K562 (cell line): ENCODE measurements at regions of chr5 and their contacts with region 1.

Region 1: DNA sequence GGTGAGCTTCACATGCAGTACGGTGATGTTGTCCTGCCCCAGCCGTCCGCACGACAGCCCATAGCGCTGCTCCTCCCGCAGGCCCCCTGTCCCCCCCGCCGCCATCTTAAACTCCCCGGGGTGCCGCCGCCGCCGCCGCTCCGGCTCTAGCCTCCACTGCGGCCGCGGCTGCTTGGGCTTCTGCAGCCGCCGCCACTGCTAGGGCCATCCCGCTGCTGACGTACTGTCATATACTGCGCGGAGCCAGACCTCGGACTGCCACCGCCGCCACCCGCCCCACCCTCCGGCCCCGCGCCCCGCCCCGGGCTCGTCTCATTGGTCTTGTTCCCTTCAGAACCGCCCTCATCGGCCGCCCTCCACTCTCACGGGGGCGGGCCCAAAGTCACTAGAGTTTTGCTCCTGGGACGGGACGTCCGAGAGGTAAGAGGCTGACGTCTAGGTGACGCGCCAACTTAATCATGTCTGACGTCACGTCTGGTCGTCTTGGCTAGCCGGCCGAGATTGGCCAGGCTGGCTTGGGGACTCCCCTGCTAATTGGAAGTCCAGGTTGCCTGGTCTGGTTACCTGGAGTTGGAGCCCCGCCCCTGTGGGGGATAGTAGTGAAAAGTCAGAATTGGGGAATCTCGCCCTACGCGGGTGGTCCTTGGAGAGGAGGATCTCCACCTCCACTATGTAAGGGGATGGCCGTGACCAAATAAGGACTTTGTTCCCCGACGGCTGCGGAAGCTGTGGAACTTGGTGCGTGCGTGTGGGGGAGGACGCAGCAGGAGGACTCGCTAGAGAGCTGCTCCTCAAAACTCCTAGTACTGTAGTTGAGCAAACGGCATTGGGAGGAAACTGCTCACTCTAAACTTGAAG is at the start of gene ELL2:
- DNase-seq: peak; percentile 93 to 100 (median 95)
- ATAC-seq: peak; percentile 87
- H3K4me3 ChIP-seq: peak within 1 kb of the TSS; percentile 81
- H3K27ac ChIP-seq: peak within 1 kb of the TSS; percentile 87
- H3K4me1 ChIP-seq: peaks cover 31 to 33% of the 10 kb centered on the region in 2 experiments; a peak in 4 of 5 replicates
- H3K27me3 ChIP-seq: no peaks in the 10 kb centered on the region
- CTCF ChIP-seq: no peak
- EP300 ChIP-seq: no peak
- POLR2A ChIP-seq: peak; percentile 66
- RAD21 ChIP-seq: no peak; a peak in 1 of 4 replicates
- polyA plus RNA-seq, gene ELL2: 4.3 to 6.8 TPM

Region 2: DNA sequence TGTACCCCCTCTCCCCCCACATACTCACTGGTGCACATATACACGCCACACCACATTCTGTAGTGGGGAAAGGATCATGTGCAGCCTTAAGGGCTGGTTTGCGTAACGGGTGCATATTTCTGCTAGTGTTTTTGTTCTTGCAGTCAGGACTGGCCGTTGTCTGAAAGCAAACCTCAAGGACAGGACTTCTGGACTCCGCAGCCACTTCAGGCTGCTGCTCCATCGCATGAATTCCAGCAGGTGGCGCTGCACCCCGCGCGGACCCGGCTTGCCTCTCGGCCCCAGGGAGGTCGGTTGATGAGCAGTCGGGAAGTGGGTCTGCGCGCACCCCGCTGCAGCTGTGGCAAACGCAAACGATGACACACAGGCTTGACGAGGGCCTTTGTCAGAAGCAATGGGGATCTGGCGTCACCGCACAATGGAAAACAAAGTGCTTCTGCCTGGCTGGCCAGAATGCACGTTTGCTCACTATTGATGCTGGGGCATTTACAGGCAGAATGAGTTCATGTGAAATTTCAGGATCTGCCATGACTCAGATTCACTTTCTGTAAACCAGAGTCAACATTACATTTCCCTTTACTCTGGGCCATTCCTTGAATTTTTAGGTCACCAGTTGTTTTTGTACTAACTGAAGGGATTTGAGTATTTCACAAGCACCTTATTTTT is 103.1 kb before region 1 on chr5:
- CTCF ChIA-PET with region 1: interaction called, 3 read pairs
- POLR2A ChIA-PET with region 1: interaction called, 3 read pairs
- in situ Hi-C with region 1: no loop called
- intact Hi-C with region 1: loop called (anchors 2 kb)
- DNase-seq: peak; percentile 88 to 90 (median 89)
- ATAC-seq: peak; percentile 97
- H3K4me3 ChIP-seq: no peak overlapping the region
- H3K27ac ChIP-seq: no peak overlapping the region
- H3K4me1 ChIP-seq: peaks cover 12 to 15% of the 10 kb centered on the region in 2 experiments; a peak in 4 of 5 replicates
- H3K27me3 ChIP-seq: 0 out of 5 replicates have a peak, but pooled peaks cover 0 to 4% of the 10 kb centered on the region in 2 experiments
- CTCF ChIP-seq: peak; percentile 90 to 97 (median 97)
- EP300 ChIP-seq: no peak
- POLR2A ChIP-seq: no peak
- RAD21 ChIP-seq: peak; percentile 97 to 99

Region 3: GRCh38 chr5:95928724-95929253 is 33.1 kb before region 1 on chr5:
- CTCF ChIA-PET with region 1: no interaction called
- POLR2A ChIA-PET with region 1: no interaction called
- in situ Hi-C with region 1: no loop called
- intact Hi-C with region 1: no loop called
- DNase-seq: no peak
- ATAC-seq: no peak; the same call in 2 of the 3 replicates
- H3K4me3 ChIP-seq: no peak overlapping the region
- H3K27ac ChIP-seq: peak overlapping the region; percentile 9; the same call in 1 of the 3 replicates
- H3K4me1 ChIP-seq: peaks cover 10 to 68% of the 10 kb centered on the region in 2 experiments
- H3K27me3 ChIP-seq: no peaks in the 10 kb centered on the region
- CTCF ChIP-seq: no peak
- EP300 ChIP-seq: no peak
- POLR2A ChIP-seq: no peak
- RAD21 ChIP-seq: no peak

Region 4: GRCh38 chr5:95939465-95939864 is 22.4 kb before region 1 on chr5:
- CTCF ChIA-PET with region 1: no interaction called
- POLR2A ChIA-PET with region 1: interaction called, 7 read pairs
- in situ Hi-C with region 1: no loop called
- intact Hi-C with region 1: loop called (anchors 2 kb)
- DNase-seq: no peak
- ATAC-seq: no peak
- H3K4me3 ChIP-seq: no peak overlapping the region
- H3K27ac ChIP-seq: no peak overlapping the region
- H3K4me1 ChIP-seq: peaks cover 9 to 60% of the 10 kb centered on the region in 2 experiments
- H3K27me3 ChIP-seq: no peaks in the 10 kb centered on the region
- CTCF ChIP-seq: no peak
- EP300 ChIP-seq: no peak
- POLR2A ChIP-seq: no peak
- RAD21 ChIP-seq: no peak

Region 5: DNA sequence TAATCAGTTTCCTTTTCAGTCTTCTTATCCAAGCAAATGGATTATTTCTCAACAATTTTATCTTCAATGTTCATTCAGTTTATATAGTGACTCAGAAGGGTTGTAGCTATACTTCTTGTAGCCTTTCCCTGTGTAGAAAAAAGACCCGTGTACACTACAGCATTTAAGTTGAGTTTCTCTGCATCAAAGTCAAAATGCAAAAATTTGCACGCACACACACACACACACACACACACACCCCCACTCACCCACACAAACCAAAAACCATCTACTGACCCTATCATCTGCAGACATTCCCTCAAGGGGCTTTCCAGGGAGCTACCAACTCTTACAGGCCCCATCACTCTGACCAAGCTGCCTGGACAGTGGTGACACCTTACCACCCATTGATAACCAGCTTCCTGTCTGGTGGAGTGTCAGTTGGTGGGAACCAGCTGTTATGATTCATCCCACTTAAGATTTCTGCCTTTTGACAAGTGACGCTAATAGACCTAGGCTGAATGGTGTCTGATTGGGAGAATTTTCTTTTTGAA is 12.0 kb after region 1 on chr5:
- CTCF ChIA-PET with region 1: no interaction called
- POLR2A ChIA-PET with region 1: interaction called, 23 read pairs
- in situ Hi-C with region 1: no loop called
- intact Hi-C with region 1: no loop called
- DNase-seq: peak; percentile 53 to 83 (median 68)
- ATAC-seq: peak; percentile 93
- H3K4me3 ChIP-seq: no peak overlapping the region
- H3K27ac ChIP-seq: peak overlapping the region; percentile 51; the same call in 1 of the 3 replicates
- H3K4me1 ChIP-seq: peaks cover 0 to 18% of the 10 kb centered on the region in 2 experiments; a peak in 3 of 5 replicates
- H3K27me3 ChIP-seq: no peaks in the 10 kb centered on the region
- CTCF ChIP-seq: no peak
- EP300 ChIP-seq: peak; percentile 89
- POLR2A ChIP-seq: no peak
- RAD21 ChIP-seq: no peak

Region 6: GRCh38 chr5:95984287-95984938 is 22.6 kb after region 1 on chr5:
- CTCF ChIA-PET with region 1: no interaction called
- POLR2A ChIA-PET with region 1: no interaction called
- in situ Hi-C with region 1: no loop called
- intact Hi-C with region 1: no loop called
- DNase-seq: no peak
- ATAC-seq: 0 out of 3 replicates have a peak, but pooled peaks have one; percentile 32
- H3K4me3 ChIP-seq: no peak overlapping the region
- H3K27ac ChIP-seq: no peak overlapping the region
- H3K4me1 ChIP-seq: no peaks in the 10 kb centered on the region; a peak in 2 of 5 replicates
- H3K27me3 ChIP-seq: no peaks in the 10 kb centered on the region
- CTCF ChIP-seq: no peak
- EP300 ChIP-seq: no peak
- POLR2A ChIP-seq: no peak
- RAD21 ChIP-seq: no peak

Region 7: DNA sequence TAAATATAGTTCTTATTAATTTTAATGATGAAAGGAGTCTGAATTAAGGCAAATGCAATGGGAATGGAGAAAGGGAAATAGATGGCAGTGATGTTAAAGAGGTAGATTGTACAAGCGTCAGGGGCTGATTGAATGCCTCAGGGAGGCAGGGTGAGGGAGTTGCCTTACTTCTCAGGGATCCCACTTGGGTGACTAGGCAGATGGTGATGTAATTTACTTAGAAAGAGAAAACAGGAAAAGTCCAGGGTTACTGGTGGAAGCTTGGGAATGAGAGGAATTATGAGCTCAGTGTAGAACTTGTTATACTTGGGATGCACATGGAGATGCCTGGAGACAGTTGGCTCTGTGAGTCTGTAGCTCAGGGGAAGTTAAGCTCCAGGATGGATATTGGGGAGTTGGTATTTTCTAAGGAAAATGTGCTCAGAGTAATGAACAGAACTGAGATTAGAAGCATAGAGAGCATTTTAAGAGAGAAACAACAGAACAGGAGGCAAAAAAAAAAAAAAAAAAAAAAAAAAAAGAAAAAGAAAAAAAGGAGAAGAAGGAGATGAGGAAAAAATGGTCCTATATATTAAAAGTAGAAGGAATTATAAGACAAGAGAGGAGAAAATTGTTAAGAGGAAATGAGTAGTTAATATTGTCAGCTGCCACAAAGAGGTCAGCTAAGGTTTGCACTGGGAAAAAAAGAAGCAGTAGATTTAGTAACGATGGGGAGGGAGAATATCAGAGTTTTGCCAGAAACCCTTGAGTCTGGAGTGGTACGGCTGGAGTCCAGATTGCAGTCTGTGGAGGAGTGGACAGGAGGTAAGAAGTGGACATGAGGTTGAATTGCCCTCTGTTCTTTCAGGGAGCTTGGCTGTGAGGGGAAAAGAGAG is 87.8 kb after region 1 on chr5:
- CTCF ChIA-PET with region 1: no interaction called
- POLR2A ChIA-PET with region 1: no interaction called
- in situ Hi-C with region 1: no loop called
- intact Hi-C with region 1: no loop called
- DNase-seq: peak in 1 of 4 experiments; percentile 30
- ATAC-seq: 0 out of 3 replicates have a peak, but pooled peaks have one; percentile 20
- H3K4me3 ChIP-seq: no peak overlapping the region
- H3K27ac ChIP-seq: no peak overlapping the region
- H3K4me1 ChIP-seq: peaks cover 3 to 6% of the 10 kb centered on the region in 2 experiments; a peak in 2 of 5 replicates
- H3K27me3 ChIP-seq: no peaks in the 10 kb centered on the region
- CTCF ChIP-seq: no peak
- EP300 ChIP-seq: no peak
- POLR2A ChIP-seq: no peak
- RAD21 ChIP-seq: no peak